ENCODE measurements at regions of chr22 and their contacts with region 1.

Region 1: GRCh38 chr22:39319270-39320022 is at the start of gene RPL3:
- DNase-seq: peak; percentile 96
- ATAC-seq: peak; percentile 89 to 94
- total RNA-seq, gene RPL3: 796 to 1,078 TPM

Region 2: DNA sequence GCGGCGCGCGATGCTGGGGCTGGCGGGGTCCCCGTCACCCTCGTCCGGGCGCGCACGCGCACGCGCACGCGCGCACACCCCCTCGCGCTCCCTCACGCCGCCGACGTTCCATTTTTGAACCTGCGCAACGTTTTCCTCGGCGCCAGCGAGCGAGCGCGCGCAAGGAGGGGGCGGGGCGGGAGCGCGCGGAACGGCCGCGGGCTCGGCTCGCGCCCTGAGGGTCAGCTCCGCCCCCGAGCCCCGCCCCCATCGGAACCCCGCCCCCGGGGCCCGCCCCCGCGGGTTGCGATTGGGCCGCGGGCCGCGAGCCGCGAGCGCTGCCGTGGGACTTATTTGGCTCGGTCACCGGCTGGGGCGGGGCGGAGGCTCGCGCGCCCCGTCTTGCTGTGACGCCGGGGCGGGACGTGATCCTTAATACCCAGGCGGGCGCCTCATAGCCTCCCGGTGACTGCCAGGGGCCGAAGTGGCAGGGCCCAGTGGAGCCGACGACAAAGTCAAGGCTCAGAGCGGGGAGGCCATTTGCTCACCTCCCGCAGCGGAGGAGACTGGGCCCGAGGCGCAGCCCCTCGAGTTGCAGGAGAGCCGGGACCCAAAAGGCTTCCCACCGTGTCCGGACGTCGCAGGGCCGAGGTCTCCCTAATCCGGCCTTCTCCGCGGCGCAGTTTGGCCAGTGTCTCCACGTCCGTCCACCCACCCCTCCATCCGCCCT is 166.8 kb before region 1 on chr22 and contains the start of gene CBX7:
- intact Hi-C with region 1: loop called in 1 of 2 experiments (anchors 5 kb)
- DNase-seq: peak; percentile 96
- ATAC-seq: peak; percentile 94 to 95
- total RNA-seq, gene CBX7: 54.5 to 63.7 TPM

Region 3: GRCh38 chr22:39170825-39171622 is 148.4 kb before region 1 on chr22:
- intact Hi-C with region 1: loop called in 1 of 2 experiments (anchors 2 kb)
- DNase-seq: peak; percentile 88
- ATAC-seq: peak; percentile 81 to 88

Region 4: DNA sequence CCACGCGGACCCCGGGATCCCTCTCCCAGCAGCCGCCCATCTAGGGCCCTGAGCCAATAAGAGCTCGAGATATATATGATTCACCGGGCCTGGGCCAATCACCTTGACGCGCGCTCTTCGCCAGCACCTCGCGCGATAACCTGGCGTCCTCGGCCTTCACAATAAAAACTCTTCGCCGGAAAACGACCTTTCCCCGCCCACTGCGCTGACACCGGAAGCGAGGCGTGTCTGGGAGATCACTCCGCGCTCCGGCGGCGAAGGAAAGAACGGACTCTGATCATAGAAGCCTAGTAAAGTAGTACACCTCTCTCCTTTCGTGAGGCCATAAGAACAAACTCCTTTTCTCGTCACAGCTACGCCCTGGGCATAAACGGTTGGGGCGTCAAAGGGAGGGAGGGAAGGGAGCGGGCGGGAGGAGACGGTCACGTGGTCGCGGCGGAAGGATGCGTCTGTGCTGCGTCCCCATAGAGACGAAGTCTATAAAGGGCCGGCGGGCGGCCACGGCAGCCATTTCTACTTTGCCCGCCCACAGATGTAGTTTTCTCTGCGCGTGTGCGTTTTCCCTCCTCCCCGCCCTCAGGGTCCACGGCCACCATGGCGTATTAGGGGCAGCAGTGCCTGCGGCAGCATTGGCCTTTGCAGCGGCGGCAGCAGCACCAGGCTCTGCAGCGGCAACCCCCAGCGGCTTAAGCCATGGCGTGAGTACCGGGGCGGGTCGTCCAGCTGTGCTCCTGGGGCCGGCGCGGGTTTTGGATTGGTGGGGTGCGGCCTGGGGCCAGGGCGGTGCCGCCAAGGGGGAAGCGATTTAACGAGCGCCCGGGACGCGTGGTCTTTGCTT is 200.8 kb after region 1 on chr22 and contains the start of gene ATF4:
- intact Hi-C with region 1: loop called (anchors 10 kb)
- DNase-seq: peak; percentile 99
- ATAC-seq: peak; percentile 87 to 88
- total RNA-seq, gene ATF4: 203 to 294 TPM

Measured in left cardiac atrium (tissue), 4 donors.